ENCODE measurements at regions of chr10 and their contacts with region 1.

Region 1: GRCh38 chr10:133309111-133309719 is 501 bp downstream of the ZNF511 start:
- DNase-seq: peak; percentile 83
- H3K4me3 ChIP-seq: peak overlapping the region; percentile 82
- H3K27ac ChIP-seq: peak overlapping the region; percentile 75
- H3K4me1 ChIP-seq: peaks cover 22% of the 10 kb centered on the region
- CTCF ChIP-seq: no peak

Region 2: GRCh38 chr10:133159950-133160819 is 149.0 kb before region 1 on chr10 and contains the start of gene KNDC1:
- CTCF ChIA-PET with region 1: no interaction called
- POLR2A ChIA-PET with region 1: no interaction called
- intact Hi-C with region 1: no loop called
- DNase-seq: no peak
- H3K4me3 ChIP-seq: no peak within 1 kb of the TSS
- H3K27ac ChIP-seq: no peak within 1 kb of the TSS
- H3K4me1 ChIP-seq: no peaks in the 10 kb centered on the region
- CTCF ChIP-seq: no peak
- total RNA-seq, gene KNDC1: not detected in 2 replicates

Region 3: GRCh38 chr10:133261726-133262325 is 47.4 kb before region 1 on chr10:
- CTCF ChIA-PET with region 1: no interaction called
- POLR2A ChIA-PET with region 1: no interaction called
- intact Hi-C with region 1: loop called (anchors 5 kb)
- DNase-seq: peak; percentile 84
- H3K4me3 ChIP-seq: peak overlapping the region; percentile 69
- H3K27ac ChIP-seq: no peak overlapping the region
- H3K4me1 ChIP-seq: peaks cover 26% of the 10 kb centered on the region
- CTCF ChIP-seq: no peak

Region 4: GRCh38 chr10:133324198-133324792 is 15.1 kb after region 1 on chr10:
- CTCF ChIA-PET with region 1: interaction called, 3 read pairs
- POLR2A ChIA-PET with region 1: interaction called, 9 read pairs
- intact Hi-C with region 1: loop called (anchors 2 kb)
- DNase-seq: peak; percentile 84
- H3K4me3 ChIP-seq: no peak overlapping the region
- H3K27ac ChIP-seq: no peak overlapping the region
- H3K4me1 ChIP-seq: peaks cover 9% of the 10 kb centered on the region
- CTCF ChIP-seq: no peak